ENCODE measurements at regions of chr11 and their contacts with region 1.

Region 1: DNA sequence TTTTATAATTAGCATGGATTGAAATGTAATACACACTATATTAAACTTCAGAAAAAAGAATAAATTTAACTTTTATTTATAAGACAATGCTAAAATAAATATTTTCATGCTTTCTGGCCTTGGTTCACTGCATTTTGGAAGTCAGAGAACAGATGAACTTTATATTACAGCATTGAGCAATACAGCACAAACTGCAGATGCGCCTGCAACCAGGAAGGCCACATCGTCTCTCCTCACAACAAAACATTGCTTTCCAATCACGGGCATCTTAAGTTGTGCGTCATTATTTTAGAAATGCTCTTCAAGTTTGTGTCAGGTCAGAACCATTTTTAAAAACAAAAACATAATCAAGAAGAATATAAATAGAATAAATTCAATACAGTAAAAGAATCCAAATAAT is 89.3 kb upstream of the CEP126 start:
- DNase-seq: no peak
- H3K4me3 ChIP-seq: no peak overlapping the region
- H3K27ac ChIP-seq: no peak overlapping the region
- H3K4me1 ChIP-seq: no peaks in the 10 kb centered on the region
- H3K27me3 ChIP-seq: no peaks in the 10 kb centered on the region
- CTCF ChIP-seq: no peak
- POLR2A ChIP-seq: no peak

Region 2: GRCh38 chr11:101390539-101390938 is 435.0 kb before region 1 on chr11:
- intact Hi-C with region 1: no loop called
- DNase-seq: no peak
- H3K4me3 ChIP-seq: no peak overlapping the region
- H3K27ac ChIP-seq: no peak overlapping the region
- H3K4me1 ChIP-seq: no peaks in the 10 kb centered on the region
- H3K27me3 ChIP-seq: no peaks in the 10 kb centered on the region
- CTCF ChIP-seq: no peak
- POLR2A ChIP-seq: no peak

Region 3: DNA sequence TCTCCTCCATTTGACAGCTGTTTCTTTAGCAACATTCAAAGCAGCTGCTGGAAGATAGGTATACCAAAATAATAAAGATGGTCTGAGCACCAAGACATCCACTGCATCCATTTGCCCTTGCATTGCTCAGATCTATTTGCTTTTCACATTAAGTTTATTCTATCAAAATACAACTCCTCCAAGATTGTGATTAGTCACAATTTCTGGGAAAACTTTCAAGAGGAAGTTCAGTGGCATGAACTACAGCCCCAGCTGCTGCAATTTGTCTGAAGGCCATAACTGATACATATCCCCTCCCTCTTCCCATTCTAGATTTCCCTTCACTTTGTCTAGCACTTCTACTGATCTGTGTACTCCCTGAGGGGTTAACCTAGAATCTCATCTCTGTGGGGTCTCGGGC is 28.2 kb before region 1 on chr11:
- intact Hi-C with region 1: loop called (anchors 2 kb)
- DNase-seq: no peak
- H3K4me3 ChIP-seq: no peak overlapping the region
- H3K27ac ChIP-seq: no peak overlapping the region
- H3K4me1 ChIP-seq: no peaks in the 10 kb centered on the region
- H3K27me3 ChIP-seq: no peaks in the 10 kb centered on the region
- CTCF ChIP-seq: no peak
- POLR2A ChIP-seq: no peak

Measured in breast epithelium (tissue), 4 donors.